ENCODE measurements at regions of chr12 and their contacts with region 1.

Region 1: GRCh38 chr12:94207849-94208621 is 59.7 kb downstream of the PLXNC1 start:
- DNase-seq: peak; percentile 22 to 72
- ATAC-seq: peak; percentile 81 to 84 (median 83)
- H3K4me3 ChIP-seq: peak overlapping the region; percentile 38
- H3K4me3 Mint-ChIP-seq: peak overlapping the region; percentile 88
- H3K27ac ChIP-seq: peak overlapping the region; percentile 94
- H3K27ac Mint-ChIP-seq: peak overlapping the region; percentile 92 to 98
- H3K4me1 ChIP-seq: peaks cover 29% of the 10 kb centered on the region
- H3K4me1 Mint-ChIP-seq: peaks cover 46 to 62% of the 10 kb centered on the region in 2 donors
- H3K27me3 ChIP-seq: no peaks in the 10 kb centered on the region
- H3K27me3 Mint-ChIP-seq: no peaks in the 10 kb centered on the region
- CTCF ChIP-seq: no peak

Region 2: DNA sequence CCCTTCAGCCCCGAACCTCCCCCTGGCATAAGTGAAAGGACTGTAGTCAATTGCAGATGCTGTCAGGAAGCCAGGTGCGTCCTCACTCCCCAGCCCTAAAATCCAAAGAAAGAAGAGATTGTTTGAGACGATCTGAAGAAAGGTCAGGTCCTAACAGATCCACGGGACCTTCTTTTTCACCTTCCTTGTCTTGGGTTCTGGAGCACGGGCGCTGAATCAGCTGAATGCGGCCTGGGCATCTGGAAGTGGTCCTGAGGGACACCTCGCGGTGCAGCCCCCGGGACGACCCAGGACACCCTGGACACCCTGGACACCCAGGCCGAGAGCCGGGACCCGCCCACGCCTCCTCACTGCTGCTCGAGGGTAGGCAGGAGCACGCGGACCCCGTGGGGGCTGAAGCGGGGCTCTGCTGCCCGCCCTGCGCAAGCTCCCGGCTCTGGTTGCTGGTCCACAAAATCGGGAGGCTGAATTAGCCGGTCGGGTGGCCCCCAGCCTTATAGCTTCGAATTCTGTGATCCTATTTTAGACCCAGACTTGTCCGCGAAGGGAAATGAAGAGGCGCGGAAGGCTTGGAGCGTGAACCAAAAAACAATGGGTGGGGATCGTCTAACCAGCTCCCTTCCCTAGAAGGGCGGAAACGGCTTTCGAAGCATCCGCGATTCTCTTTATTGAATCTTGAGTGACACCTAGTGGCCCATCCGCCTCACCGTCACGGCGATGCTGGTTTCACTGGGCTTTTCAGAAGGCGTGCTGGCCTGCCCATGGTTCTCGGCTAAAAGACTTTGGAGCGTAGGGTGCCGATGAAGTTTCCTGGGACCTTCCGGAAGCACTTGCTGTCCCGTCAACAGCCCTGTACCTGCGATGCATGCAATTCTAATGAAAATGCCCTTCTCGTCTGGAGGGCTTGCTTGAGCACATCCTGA is 106.0 kb before region 1 on chr12:
- intact Hi-C with region 1: no loop called
- DNase-seq: peak; percentile 74 to 93
- ATAC-seq: peak; percentile 89 to 90 (median 89)
- H3K4me3 ChIP-seq: peak overlapping the region; percentile 84
- H3K4me3 Mint-ChIP-seq: peak overlapping the region; percentile 88
- H3K27ac ChIP-seq: peak overlapping the region; percentile 21
- H3K27ac Mint-ChIP-seq: peak overlapping the region in 1 of 2 donors; percentile 69
- H3K4me1 ChIP-seq: peaks cover 15% of the 10 kb centered on the region
- H3K4me1 Mint-ChIP-seq: peaks cover 5% of the 10 kb centered on the region in 2 donors
- H3K27me3 ChIP-seq: peaks cover 3% of the 10 kb centered on the region
- H3K27me3 Mint-ChIP-seq: peaks cover 8 to 31% of the 10 kb centered on the region in 2 donors
- CTCF ChIP-seq: peak; percentile 67

Region 3: DNA sequence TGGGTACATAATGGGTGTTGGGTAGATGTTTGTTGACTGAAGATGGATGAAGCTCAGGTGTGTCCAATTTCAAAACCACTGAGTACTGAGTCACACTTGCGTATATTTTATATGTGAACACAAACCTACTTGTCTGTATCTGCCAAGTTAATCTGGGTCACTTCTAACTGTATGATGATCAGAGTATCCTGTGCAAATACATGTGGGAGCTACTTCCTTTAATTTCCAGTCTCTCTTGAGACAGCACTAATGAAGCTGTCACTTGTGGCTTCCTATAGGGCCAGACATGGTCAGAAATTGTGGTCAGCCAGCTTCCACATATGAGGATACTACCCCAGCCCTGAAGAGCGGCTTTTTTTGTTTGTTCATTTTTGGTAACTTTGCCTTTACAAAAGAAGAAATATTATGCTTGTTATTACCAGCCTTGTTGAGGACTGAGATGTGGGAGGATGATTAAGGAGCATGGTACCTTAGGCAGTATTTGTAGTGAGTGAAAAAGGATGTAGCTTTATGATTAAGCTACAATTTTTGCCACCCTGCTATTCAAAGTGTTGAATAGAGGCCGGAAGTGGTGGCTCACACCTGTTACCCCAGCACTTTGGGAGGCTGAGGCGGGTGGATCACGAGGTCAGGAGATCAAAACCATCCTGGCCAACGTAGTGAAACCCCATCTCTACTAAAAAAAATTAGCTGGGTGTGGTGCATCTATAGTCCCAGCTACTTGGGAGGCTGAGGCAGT is 27.3 kb before region 1 on chr12:
- intact Hi-C with region 1: loop called (anchors 2 kb)
- DNase-seq: peak; percentile 54 to 56
- ATAC-seq: peak; percentile 78 to 86 (median 82)
- H3K4me3 ChIP-seq: no peak overlapping the region
- H3K4me3 Mint-ChIP-seq: peak overlapping the region; percentile 82
- H3K27ac ChIP-seq: peak overlapping the region; percentile 58
- H3K27ac Mint-ChIP-seq: peak overlapping the region; percentile 71 to 92
- H3K4me1 ChIP-seq: peaks cover 25% of the 10 kb centered on the region
- H3K4me1 Mint-ChIP-seq: peaks cover 27 to 46% of the 10 kb centered on the region in 2 donors
- H3K27me3 ChIP-seq: no peaks in the 10 kb centered on the region
- H3K27me3 Mint-ChIP-seq: no peaks in the 10 kb centered on the region
- CTCF ChIP-seq: no peak

Region 4: DNA sequence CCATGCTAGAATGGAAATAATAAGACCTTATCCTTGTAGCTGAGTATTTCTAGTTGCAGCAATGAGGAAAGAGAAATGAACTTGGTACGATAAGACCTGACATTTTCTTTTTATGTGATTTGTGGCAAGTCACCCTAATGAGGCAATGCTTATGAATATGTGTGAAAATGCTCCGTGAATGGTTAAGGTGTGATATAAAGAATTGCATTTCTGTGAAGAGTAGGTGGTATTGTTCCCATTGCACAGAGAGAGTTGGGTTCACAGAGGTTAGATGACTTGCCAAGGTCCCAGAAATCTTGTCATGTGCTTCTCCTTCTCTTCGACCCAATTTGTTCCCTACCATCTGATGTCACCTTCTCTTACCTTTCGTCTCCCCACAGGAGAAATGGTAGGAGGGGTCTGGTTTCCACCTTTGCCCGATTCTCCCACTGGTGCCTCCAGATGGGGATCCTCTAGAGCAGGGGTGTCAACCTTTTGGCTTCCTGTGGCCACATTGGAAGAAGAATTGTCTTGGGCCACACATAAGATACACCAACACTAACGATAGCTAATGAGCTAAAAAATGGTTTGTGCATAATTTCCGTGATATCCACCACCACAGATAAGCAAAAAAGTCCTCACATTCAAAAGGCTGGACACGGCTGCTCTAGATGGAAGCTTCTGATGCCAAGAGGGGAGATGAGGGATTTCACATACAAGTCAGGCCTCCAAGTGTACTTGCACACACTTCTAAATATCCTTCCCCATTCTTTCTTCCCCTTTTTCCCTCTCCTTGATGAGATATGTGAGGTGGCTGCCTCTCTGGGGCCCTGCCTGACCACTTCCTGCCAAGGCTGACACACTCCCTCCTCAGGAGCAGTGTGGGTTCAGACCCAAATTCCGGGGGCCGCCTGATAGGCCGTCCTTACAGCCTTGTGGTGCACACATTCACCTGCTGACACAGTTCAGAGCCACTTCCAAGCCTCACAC is 36.4 kb after region 1 on chr12:
- intact Hi-C with region 1: loop called (anchors 5 kb)
- DNase-seq: peak; percentile 52 to 61
- ATAC-seq: peak; percentile 73 to 89 (median 81)
- H3K4me3 ChIP-seq: no peak overlapping the region
- H3K4me3 Mint-ChIP-seq: peak overlapping the region; percentile 78
- H3K27ac ChIP-seq: peak overlapping the region; percentile 85
- H3K27ac Mint-ChIP-seq: peak overlapping the region; percentile 90
- H3K4me1 ChIP-seq: peaks cover 39% of the 10 kb centered on the region
- H3K4me1 Mint-ChIP-seq: peaks cover 55 to 61% of the 10 kb centered on the region in 2 donors
- H3K27me3 ChIP-seq: no peaks in the 10 kb centered on the region
- H3K27me3 Mint-ChIP-seq: no peaks in the 10 kb centered on the region
- CTCF ChIP-seq: no peak

Region 5: DNA sequence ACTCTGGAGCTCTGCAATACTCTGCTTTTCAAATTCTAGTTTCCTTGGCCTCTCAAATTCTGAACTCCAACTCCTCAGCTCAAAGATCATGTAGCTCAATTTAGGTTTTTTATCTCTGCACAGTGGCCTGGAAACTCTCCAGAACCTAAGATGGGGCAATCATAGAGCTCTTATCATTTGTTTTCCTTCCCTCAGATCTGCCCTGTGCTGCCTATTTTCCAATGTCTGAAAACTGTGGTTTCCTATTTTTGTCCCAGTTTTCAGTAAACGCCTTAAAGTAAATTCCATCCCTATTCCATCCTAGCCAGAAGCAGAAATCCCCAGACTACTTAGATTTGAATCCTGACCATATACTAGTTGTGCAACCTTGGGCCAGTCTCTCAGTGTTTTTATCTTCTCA is 178.4 kb after region 1 on chr12:
- intact Hi-C with region 1: no loop called
- DNase-seq: no peak
- ATAC-seq: no peak
- H3K4me3 ChIP-seq: no peak overlapping the region
- H3K4me3 Mint-ChIP-seq: no peak overlapping the region
- H3K27ac ChIP-seq: no peak overlapping the region
- H3K27ac Mint-ChIP-seq: no peak overlapping the region
- H3K4me1 ChIP-seq: no peaks in the 10 kb centered on the region
- H3K4me1 Mint-ChIP-seq: no peaks in the 10 kb centered on the region
- H3K27me3 ChIP-seq: no peaks in the 10 kb centered on the region
- H3K27me3 Mint-ChIP-seq: no peaks in the 10 kb centered on the region
- CTCF ChIP-seq: no peak